PC-9 (cell line): ENCODE measurements at regions of chr11 and their contacts with region 1.

Region 1: GRCh38 chr11:64358907-64359711 is at the start of gene RPS6KA4:
- DNase-seq: peak; percentile 54 to 79
- H3K4me3 ChIP-seq: peak within 1 kb of the TSS; percentile 91
- H3K27ac ChIP-seq: peak within 1 kb of the TSS; percentile 59
- H3K4me1 ChIP-seq: peaks cover 42% of the 10 kb centered on the region
- H3K27me3 ChIP-seq: no peaks in the 10 kb centered on the region
- CTCF ChIP-seq: no peak
- total RNA-seq, gene RPS6KA4: 60.6 and 64.3 TPM in 2 replicates

Region 2: GRCh38 chr11:64276653-64277431 is 82.3 kb before region 1 on chr11:
- CTCF ChIA-PET with region 1: interaction called, 11 read pairs
- POLR2A ChIA-PET with region 1: interaction called, 3 read pairs
- intact Hi-C with region 1: loop called (anchors 2 kb)
- DNase-seq: peak; percentile 85 to 97
- H3K4me3 ChIP-seq: no peak overlapping the region
- H3K27ac ChIP-seq: peak overlapping the region; percentile 41
- H3K4me1 ChIP-seq: peaks cover 28% of the 10 kb centered on the region
- H3K27me3 ChIP-seq: no peaks in the 10 kb centered on the region
- CTCF ChIP-seq: no peak

Region 3: GRCh38 chr11:64331557-64332371 is 27.3 kb before region 1 on chr11:
- CTCF ChIA-PET with region 1: interaction called, 19 read pairs
- POLR2A ChIA-PET with region 1: interaction called, 6 read pairs
- intact Hi-C with region 1: loop called (anchors 1 kb)
- DNase-seq: peak; percentile 97 to 99
- H3K4me3 ChIP-seq: no peak overlapping the region; the same call in 1 of the 2 replicates
- H3K27ac ChIP-seq: peak overlapping the region; percentile 83
- H3K4me1 ChIP-seq: peaks cover 51% of the 10 kb centered on the region
- H3K27me3 ChIP-seq: no peaks in the 10 kb centered on the region
- CTCF ChIP-seq: peak; percentile 88

Region 4: DNA sequence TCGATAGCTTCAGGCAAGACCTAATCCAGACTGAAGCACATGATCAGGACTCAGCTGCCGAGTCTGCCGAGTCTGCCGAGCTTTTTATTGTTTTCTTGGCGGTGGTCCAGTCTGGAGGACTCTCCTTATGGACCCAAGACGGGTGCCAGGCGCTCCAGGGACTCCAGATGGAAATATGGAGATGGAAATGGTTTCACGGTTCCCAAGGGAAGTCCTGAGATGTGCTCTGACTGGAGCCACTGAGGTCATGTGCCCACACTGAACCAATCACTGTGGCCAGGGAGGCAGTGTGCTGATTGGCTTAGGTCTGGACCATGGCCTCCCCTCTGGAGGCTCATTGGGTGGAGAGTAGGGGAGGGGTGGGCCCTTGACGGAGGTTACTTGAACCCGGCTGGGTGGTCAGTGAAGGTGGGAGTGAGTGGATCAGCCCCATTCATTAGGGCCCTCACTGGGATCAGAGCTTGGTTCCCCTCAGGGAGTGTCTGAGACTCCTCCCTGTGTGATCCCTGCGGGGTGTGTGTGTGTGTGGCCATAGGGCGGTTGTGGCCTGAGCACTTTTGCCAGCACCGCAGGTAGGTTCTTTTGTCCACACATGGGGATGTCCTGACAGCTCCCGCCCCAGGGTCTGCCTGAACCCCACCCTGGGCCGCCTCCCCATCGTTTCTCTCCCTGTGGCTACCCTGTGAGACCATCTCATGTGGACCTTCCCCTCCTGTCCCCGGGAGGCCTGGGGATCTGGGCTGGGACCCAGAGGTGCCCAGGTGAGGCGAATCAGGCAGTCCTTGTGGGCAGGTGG is 13.9 kb after region 1 on chr11:
- CTCF ChIA-PET with region 1: interaction called, 10 read pairs
- POLR2A ChIA-PET with region 1: interaction called, 10 read pairs
- intact Hi-C with region 1: no loop called
- DNase-seq: no peak
- H3K4me3 ChIP-seq: no peak overlapping the region
- H3K27ac ChIP-seq: no peak overlapping the region
- H3K4me1 ChIP-seq: no peaks in the 10 kb centered on the region
- H3K27me3 ChIP-seq: no peaks in the 10 kb centered on the region
- CTCF ChIP-seq: no peak

Region 5: DNA sequence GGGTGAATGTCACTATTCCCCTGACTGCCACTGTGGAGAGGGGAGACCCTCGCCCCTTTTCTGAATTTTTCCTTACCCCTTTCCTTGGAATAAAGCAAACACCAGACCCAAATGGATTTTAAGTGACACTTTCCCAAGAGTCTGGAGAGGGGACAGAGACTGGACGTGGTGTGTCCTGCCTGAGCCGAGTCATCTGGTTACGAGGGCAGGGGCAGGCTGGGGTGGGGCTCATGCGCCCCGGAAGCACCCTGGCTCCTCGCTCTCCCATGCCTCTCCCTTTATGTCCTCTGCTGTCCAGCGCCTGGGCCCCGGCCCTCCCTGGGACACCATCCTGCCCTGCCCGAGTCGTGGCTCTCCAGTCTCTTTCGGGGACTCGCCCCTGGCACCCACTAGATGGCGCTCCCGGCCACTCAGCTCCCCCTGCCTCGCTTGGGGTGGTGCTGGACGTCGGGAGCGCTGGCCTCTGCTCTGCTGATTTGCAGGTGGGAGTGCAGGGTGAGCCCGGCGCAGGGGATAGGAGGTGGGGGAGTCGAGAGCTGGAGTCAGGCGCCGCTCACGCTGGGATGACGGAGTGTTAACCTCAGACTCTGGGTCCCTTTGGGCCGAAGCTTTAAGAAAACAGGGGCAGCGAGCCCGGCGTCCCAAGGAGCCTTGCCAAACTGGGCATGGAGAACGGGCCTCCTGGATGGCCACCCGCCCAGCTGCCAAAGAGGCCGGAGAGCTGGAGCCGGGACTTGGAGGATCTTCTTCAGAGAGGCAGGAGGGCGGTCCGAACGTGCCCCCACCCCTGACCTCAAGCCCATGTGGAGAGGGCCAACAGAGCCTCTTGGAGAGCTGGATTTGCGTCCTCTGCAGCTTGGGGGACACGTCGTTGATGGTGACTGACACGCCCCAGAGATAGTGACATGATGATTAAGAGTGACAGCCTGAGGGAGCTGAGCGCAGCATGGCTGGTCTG is 89.8 kb after region 1 on chr11:
- CTCF ChIA-PET with region 1: interaction called, 7 read pairs
- POLR2A ChIA-PET with region 1: interaction called, 5 read pairs
- intact Hi-C with region 1: loop called (anchors 2 kb)
- DNase-seq: peak; percentile 60 to 89
- H3K4me3 ChIP-seq: peak overlapping the region; percentile 40; the same call in 1 of the 2 replicates
- H3K27ac ChIP-seq: no peak overlapping the region
- H3K4me1 ChIP-seq: peaks cover 16% of the 10 kb centered on the region
- H3K27me3 ChIP-seq: peaks cover 30% of the 10 kb centered on the region
- CTCF ChIP-seq: peak; percentile 92

Region 6: GRCh38 chr11:64652586-64653387 is 293.7 kb after region 1 on chr11:
- CTCF ChIA-PET with region 1: interaction called, 4 read pairs
- POLR2A ChIA-PET with region 1: interaction called, 5 read pairs
- intact Hi-C with region 1: loop called (anchors 1 kb)
- DNase-seq: peak; percentile 46 to 88
- H3K4me3 ChIP-seq: no peak overlapping the region
- H3K27ac ChIP-seq: no peak overlapping the region
- H3K4me1 ChIP-seq: peaks cover 17% of the 10 kb centered on the region
- H3K27me3 ChIP-seq: no peaks in the 10 kb centered on the region
- CTCF ChIP-seq: peak; percentile 97

Region 7: GRCh38 chr11:65497141-65498041 is 1138.3 kb after region 1 on chr11:
- CTCF ChIA-PET with region 1: no interaction called
- POLR2A ChIA-PET with region 1: interaction called, 19 read pairs
- intact Hi-C with region 1: no loop called
- DNase-seq: peak; percentile 91 to 100
- H3K4me3 ChIP-seq: peak overlapping the region; percentile 99
- H3K27ac ChIP-seq: peak overlapping the region; percentile 97
- H3K4me1 ChIP-seq: peaks cover 39% of the 10 kb centered on the region
- H3K27me3 ChIP-seq: no peaks in the 10 kb centered on the region
- CTCF ChIP-seq: peak; percentile 13; the same call in 1 of the 2 replicates